ENCODE measurements at regions of chr10 and their contacts with region 1.

Region 1: GRCh38 chr10:13382703-13383398 is 34.8 kb upstream of the SEPHS1 start:
- DNase-seq: peak in 2 of 3 donors; percentile 63 to 71
- H3K4me3 ChIP-seq: peak overlapping the region in 6 of 7 experiments; percentile 46 to 77 (median 58)
- H3K27ac ChIP-seq: no peak overlapping the region
- H3K4me1 ChIP-seq: peaks cover 0 to 12% (median 8%) of the 10 kb centered on the region in 4 experiments
- H3K27me3 ChIP-seq: peaks cover 0 to 26% (median 0%) of the 10 kb centered on the region in 5 experiments

Region 2: GRCh38 chr10:13371897-13372470 is 10.9 kb before region 1 on chr10:
- CTCF ChIA-PET with region 1: interaction called, 13 read pairs
- POLR2A ChIA-PET with region 1: no interaction called
- DNase-seq: peak; percentile 87 to 95 (median 92)
- H3K4me3 ChIP-seq: no peak overlapping the region
- H3K27ac ChIP-seq: no peak overlapping the region
- H3K4me1 ChIP-seq: no peaks in the 10 kb centered on the region
- H3K27me3 ChIP-seq: no peaks in the 10 kb centered on the region

Measured in common myeloid progenitor, CD34-positive (primary cell).